MCF 10A (cell line): ENCODE measurements at regions of chr5 and their contacts with region 1.

Region 1: DNA sequence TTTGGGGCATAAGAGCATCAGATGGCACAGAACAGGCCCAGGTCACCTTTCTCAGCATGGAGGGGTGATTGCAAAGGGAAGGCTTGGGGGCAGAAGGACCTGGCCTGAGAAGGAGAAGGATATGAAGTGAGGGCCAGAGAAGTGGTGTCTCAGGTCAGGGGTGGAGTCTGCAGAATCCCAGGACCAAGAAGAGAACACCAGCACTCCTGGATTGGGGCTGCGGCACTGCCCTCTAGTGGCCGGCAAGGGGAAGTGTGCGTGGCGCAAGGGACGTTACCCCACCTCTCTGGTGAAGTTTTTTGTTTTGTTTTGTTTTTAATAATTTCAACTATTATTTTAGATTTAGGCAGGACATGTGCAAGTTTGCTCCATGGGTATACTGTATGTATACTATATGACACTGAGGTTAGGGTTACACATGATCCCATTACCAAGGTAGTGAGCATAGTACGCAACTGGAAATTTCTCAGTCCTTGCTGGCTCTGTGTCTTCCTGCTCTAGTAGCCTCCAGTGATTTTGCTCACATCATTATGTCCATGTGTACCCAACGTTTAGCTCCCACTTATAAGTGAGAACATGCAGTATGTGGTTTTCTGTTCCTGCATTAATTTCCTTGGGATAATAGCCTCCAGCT is 1548.6 kb downstream of the EFNA5 start:
- DNase-seq: peak; percentile 43
- H3K4me3 Mint-ChIP-seq: no peak overlapping the region
- H3K27ac Mint-ChIP-seq: no peak overlapping the region
- H3K4me1 Mint-ChIP-seq: no peaks in the 10 kb centered on the region
- H3K27me3 Mint-ChIP-seq: no peaks in the 10 kb centered on the region
- CTCF ChIP-seq: peak; percentile 94

Region 2: DNA sequence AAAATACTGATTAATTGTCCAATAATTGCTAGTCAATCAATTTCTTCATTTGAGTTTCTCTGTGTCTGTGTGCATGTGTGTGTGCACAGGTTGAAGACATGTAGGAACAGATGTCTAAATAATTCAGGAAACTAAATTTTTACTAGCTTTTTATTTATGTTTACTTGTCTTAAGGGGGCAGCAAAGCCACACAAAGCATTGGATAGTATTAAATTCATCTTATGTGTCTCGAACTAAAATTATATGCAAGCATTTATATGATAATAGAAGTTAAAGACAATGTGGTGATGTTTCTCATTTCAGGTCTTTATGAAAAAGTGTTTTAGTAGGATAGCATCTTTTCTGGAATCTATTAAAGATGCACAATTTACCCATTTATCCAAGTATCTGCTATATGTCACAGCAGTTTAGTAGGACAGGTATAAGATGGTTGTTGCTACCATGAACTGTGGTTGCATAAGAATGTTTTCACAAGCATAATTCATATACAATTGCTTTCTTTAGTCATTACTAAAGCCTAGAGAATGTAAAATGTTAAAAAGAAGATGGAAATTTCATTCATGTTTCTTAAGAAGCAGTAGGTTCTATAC is 1774.9 kb before region 1 on chr5:
- CTCF ChIA-PET with region 1: interaction called, 4 read pairs
- POLR2A ChIA-PET with region 1: no interaction called
- intact Hi-C with region 1: loop called (anchors 10 kb)
- DNase-seq: peak; percentile 57
- H3K4me3 Mint-ChIP-seq: no peak overlapping the region
- H3K27ac Mint-ChIP-seq: no peak overlapping the region
- H3K4me1 Mint-ChIP-seq: peaks cover 15% of the 10 kb centered on the region
- H3K27me3 Mint-ChIP-seq: no peaks in the 10 kb centered on the region
- CTCF ChIP-seq: peak; percentile 38